ENCODE measurements at regions of chr2 and their contacts with region 1.

Region 1: GRCh38 chr2:42053791-42054701 is 6.2 kb downstream of the PKDCC start:
- DNase-seq: no peak
- H3K4me3 ChIP-seq: no peak overlapping the region
- H3K4me3 Mint-ChIP-seq: peak overlapping the region; percentile 69
- H3K27ac Mint-ChIP-seq: peak overlapping the region; percentile 98
- H3K4me1 ChIP-seq: peaks cover 85% of the 10 kb centered on the region
- H3K4me1 Mint-ChIP-seq: peaks cover 60% of the 10 kb centered on the region
- H3K27me3 ChIP-seq: no peaks in the 10 kb centered on the region
- H3K27me3 Mint-ChIP-seq: no peaks in the 10 kb centered on the region
- CTCF ChIP-seq: no peak

Region 2: GRCh38 chr2:41853427-41854216 is 200.4 kb before region 1 on chr2:
- CTCF ChIA-PET with region 1: interaction called, 5 read pairs
- POLR2A ChIA-PET with region 1: interaction called, 6 read pairs
- intact Hi-C with region 1: loop called (anchors 1 kb)
- DNase-seq: peak; percentile 70 to 78
- H3K4me3 ChIP-seq: no peak overlapping the region
- H3K4me3 Mint-ChIP-seq: no peak overlapping the region
- H3K27ac Mint-ChIP-seq: peak overlapping the region; percentile 8
- H3K4me1 ChIP-seq: peaks cover 15% of the 10 kb centered on the region
- H3K4me1 Mint-ChIP-seq: peaks cover 2% of the 10 kb centered on the region
- H3K27me3 ChIP-seq: no peaks in the 10 kb centered on the region
- H3K27me3 Mint-ChIP-seq: no peaks in the 10 kb centered on the region
- CTCF ChIP-seq: peak; percentile 82 to 94